ENCODE measurements at regions of chr9 and their contacts with region 1.

Region 1: DNA sequence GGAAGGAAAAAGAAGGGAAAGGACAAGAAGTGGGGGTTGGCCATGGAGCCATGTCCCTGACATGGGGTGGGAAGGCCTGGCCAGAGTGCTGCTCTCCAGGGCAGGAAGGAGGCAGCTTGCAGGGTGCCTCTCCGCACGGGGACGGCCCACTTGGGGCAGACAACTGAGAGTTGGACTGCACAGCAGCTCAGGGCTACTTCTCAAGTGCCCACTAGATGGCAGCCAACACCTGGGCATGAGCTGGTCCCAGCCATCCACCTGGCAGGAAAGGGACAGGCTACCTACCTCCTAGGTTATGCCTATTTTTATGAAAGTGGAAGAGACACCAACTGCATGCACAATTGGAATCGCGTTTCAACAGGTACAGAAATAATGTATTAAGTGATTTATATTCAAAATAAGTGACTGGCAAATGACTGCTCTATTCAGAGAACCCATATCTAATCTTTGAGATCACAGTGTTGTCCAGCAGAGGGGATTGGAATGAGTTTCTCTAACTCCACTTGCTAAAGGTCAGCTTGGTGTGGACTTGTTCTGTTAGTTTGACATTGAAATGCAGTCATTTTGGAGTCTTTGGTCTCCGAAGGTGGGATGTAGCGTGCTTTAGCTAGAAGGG is 113.4 kb downstream of the SYK start:
- DNase-seq: peak; percentile 37 to 71 (median 61)
- ATAC-seq: peak; percentile 90
- H3K4me3 ChIP-seq: no peak overlapping the region
- H3K4me3 Mint-ChIP-seq: no peak overlapping the region
- H3K27ac ChIP-seq: no peak overlapping the region
- H3K27ac Mint-ChIP-seq: peak overlapping the region in 1 of 9 donors; percentile 60
- H3K4me1 ChIP-seq: no peaks in the 10 kb centered on the region
- H3K4me1 Mint-ChIP-seq: peaks cover 0 to 2% (median 0%) of the 10 kb centered on the region in 7 donors
- H3K27me3 ChIP-seq: no peaks in the 10 kb centered on the region
- H3K27me3 Mint-ChIP-seq: no peaks in the 10 kb centered on the region

Region 2: GRCh38 chr9:91253488-91253887 is 338.5 kb after region 1 on chr9:
- CTCF ChIA-PET with region 1: no interaction called
- POLR2A ChIA-PET with region 1: no interaction called
- intact Hi-C with region 1: loop called in 1 of 2 experiments (anchors 5 kb)
- DNase-seq: peak in 6 of 9 donors; percentile 5 to 32 (median 12)
- ATAC-seq: peak; percentile 64
- H3K4me3 ChIP-seq: no peak overlapping the region
- H3K4me3 Mint-ChIP-seq: no peak overlapping the region
- H3K27ac ChIP-seq: no peak overlapping the region
- H3K27ac Mint-ChIP-seq: peak overlapping the region in 1 of 9 donors; percentile 23
- H3K4me1 ChIP-seq: peaks cover 0 to 8% of the 10 kb centered on the region in 2 donors
- H3K4me1 Mint-ChIP-seq: peaks cover 0 to 45% (median 6%) of the 10 kb centered on the region in 7 donors
- H3K27me3 ChIP-seq: no peaks in the 10 kb centered on the region
- H3K27me3 Mint-ChIP-seq: no peaks in the 10 kb centered on the region

Region 3: DNA sequence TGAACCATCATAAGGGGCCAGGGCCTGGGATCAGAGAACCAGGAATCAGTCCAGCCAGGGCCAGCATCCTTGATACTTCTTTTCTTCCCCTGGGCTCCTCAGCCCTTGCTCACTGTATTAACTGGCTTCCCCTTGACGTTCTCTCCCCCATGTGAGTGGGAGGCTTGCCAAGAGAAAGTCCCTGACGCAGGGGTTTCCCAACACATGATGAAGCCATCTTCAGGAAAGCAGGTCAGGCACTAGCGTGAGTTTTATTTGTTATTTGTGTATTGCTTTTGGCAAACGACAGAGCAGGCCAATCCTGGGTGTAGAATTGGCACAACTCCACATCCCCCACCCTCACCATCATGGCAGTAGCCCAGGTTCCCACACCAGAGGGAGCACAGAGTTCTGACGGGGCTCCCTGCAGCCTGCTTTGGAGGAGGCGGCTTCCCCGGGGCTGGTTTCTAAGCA is 674.2 kb after region 1 on chr9:
- CTCF ChIA-PET with region 1: no interaction called
- POLR2A ChIA-PET with region 1: no interaction called
- intact Hi-C with region 1: no loop called
- DNase-seq: no peak
- ATAC-seq: no peak
- H3K4me3 ChIP-seq: no peak overlapping the region
- H3K4me3 Mint-ChIP-seq: no peak overlapping the region
- H3K27ac ChIP-seq: no peak overlapping the region
- H3K27ac Mint-ChIP-seq: no peak overlapping the region
- H3K4me1 ChIP-seq: no peaks in the 10 kb centered on the region
- H3K4me1 Mint-ChIP-seq: no peaks in the 10 kb centered on the region
- H3K27me3 ChIP-seq: no peaks in the 10 kb centered on the region
- H3K27me3 Mint-ChIP-seq: peaks cover 0 to 15% (median 14%) of the 10 kb centered on the region in 5 donors

Region 4: DNA sequence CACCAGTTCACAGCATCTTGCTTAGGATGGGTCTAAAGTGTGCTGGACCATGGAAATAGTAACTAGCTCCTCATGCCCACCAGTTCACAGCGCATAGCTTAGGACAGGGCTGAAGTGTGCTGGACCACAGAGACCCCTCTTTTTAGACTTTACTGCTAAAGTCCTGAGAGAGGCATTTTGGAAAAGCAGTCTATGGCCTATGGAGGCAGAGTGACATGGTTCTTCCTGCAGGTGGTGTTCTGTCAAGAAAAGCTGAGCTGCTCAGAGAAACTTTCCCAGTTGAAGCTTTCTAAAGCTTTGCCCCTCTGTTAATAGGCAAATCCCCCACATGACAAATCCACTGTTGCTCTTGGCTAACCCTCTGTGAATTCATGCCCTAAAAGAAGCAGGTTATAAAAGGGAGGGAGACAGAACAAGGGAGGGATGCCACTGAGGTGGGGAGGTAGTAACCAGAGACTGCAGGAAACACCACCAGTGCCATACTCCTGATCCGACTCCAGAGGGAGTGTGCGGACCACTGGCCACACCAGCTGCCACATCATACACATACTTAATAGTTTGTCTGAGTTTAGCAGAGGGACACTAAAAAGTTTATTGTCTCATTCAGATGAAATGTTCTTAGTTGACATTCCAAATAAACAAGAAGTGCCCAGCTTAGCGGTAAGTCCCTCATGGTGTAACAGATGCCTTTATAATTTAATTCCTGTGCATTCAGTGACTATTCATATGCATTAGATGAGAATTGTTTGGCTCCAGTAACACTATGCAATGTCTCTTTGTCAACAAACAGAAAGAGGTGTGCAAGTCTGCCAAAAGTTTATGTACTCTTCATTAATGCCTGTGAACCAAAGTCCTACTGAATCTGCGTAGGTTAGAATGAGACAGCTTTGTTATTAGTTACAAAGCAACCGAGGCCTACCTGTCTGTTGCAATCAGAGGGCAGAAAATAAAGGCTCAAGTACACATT is 744.8 kb after region 1 on chr9:
- CTCF ChIA-PET with region 1: no interaction called
- POLR2A ChIA-PET with region 1: no interaction called
- intact Hi-C with region 1: loop called in 1 of 2 experiments (anchors 5 kb)
- DNase-seq: no peak
- ATAC-seq: no peak
- H3K4me3 ChIP-seq: no peak overlapping the region
- H3K4me3 Mint-ChIP-seq: no peak overlapping the region
- H3K27ac ChIP-seq: no peak overlapping the region
- H3K27ac Mint-ChIP-seq: no peak overlapping the region
- H3K4me1 ChIP-seq: no peaks in the 10 kb centered on the region
- H3K4me1 Mint-ChIP-seq: no peaks in the 10 kb centered on the region
- H3K27me3 ChIP-seq: no peaks in the 10 kb centered on the region
- H3K27me3 Mint-ChIP-seq: peaks cover 5 to 26% (median 17%) of the 10 kb centered on the region in 5 donors

Region 5: DNA sequence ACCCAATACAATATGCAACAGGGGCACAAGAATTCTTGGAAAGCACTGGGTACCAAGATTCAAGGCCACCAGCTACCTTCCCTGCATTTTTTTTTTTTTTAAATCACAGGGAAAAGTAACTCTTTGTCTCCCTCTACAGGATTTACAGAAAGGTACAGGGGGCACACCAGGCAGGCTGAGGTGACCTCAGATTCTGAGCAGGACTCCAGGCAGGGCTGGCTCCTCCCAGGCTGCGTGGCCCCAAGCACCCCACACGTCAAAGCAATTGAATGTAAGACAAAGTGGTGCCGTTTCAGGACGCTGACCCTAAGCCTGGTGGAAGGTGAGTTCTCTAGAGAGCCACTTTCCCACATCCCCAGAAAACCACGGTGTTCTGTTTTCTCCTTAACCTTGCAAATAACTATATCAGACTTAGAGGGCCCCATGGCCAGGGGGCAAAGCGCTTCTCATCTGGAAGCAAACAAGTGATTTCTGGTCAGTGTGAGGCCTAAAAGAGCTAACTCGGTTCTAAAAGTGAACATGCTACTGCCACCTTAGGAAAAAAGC is 812.4 kb after region 1 on chr9:
- CTCF ChIA-PET with region 1: interaction called, 15 read pairs
- POLR2A ChIA-PET with region 1: no interaction called
- intact Hi-C with region 1: loop called (anchors 1 kb)
- DNase-seq: peak in 5 of 9 donors; percentile 10 to 34 (median 14)
- ATAC-seq: peak; percentile 65
- H3K4me3 ChIP-seq: no peak overlapping the region
- H3K4me3 Mint-ChIP-seq: no peak overlapping the region
- H3K27ac ChIP-seq: no peak overlapping the region
- H3K27ac Mint-ChIP-seq: no peak overlapping the region
- H3K4me1 ChIP-seq: no peaks in the 10 kb centered on the region
- H3K4me1 Mint-ChIP-seq: peaks cover 0 to 7% (median 0%) of the 10 kb centered on the region in 7 donors
- H3K27me3 ChIP-seq: no peaks in the 10 kb centered on the region
- H3K27me3 Mint-ChIP-seq: peaks cover 0 to 6% (median 1%) of the 10 kb centered on the region in 5 donors

Region 6: DNA sequence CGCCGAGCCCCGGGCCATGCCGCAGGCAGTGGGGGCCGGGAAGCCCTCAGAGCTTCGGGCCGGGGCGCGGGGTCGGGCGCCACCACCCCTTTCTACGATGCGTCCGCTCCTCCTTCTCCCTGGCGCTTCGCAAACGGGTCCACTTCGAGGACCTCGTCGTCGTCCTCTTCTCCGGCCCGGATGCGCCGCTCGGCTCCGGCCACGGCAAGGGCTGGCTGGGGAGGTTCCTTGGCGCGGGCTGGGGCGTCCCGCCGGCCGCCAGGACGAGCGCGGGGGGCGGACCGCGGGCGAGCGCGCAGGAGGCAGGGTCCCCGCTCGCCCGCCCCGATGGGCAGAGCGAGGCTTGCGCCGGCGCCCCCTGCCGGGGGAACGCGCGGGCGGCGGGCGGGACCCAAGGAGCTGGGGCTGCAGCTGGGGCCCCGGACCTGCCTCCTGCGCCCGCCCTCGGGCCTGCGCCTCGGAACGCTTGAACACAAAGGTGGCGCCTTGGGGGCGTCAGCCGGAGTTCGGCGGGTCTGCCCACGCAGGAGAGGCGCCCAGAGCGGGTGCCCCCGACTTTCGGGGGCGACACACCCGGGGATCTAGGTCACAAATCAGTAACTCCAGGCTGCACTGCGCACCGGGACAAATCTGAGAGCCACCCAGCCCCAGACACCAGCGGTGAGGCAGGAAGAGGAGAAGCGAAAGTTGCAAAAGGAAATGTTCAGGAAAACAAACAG is 1035.1 kb after region 1 on chr9 and contains the start of gene ROR2:
- CTCF ChIA-PET with region 1: no interaction called
- POLR2A ChIA-PET with region 1: no interaction called
- intact Hi-C with region 1: loop called in 1 of 2 experiments (anchors 10 kb)
- DNase-seq: peak in 4 of 9 donors; percentile 1 to 82 (median 18)
- ATAC-seq: peak; percentile 63
- H3K4me3 ChIP-seq: peak within 1 kb of the TSS; percentile 13
- H3K4me3 Mint-ChIP-seq: peak within 1 kb of the TSS in 9 of 10 donors; percentile 13 to 82 (median 49)
- H3K27ac ChIP-seq: no peak within 1 kb of the TSS
- H3K27ac Mint-ChIP-seq: no peak within 1 kb of the TSS
- H3K4me1 ChIP-seq: peaks cover 0 to 4% of the 10 kb centered on the region in 2 donors
- H3K4me1 Mint-ChIP-seq: peaks cover 0 to 11% (median 7%) of the 10 kb centered on the region in 7 donors
- H3K27me3 ChIP-seq: peaks cover 3 to 14% of the 10 kb centered on the region in 2 donors
- H3K27me3 Mint-ChIP-seq: peaks cover 63 to 78% (median 76%) of the 10 kb centered on the region in 5 donors
- total RNA-seq, gene ROR2: 0.48 to 2.1 TPM in 2 of 5 experiments, not detected in the others

Measured in naive thymus-derived CD4-positive, alpha-beta T cell (primary cell).